Activated CD8-positive, alpha-beta memory T cell treated with anti-CD3 and anti-CD28 coated beads, Interleukin-2, amount 10 ng/mL, durations not matched to agents 7 days and 5 days (primary cell): ENCODE measurements at regions of chr17 and their contacts with region 1.

Region 1: GRCh38 chr17:14926526-14927122 is 338.5 kb downstream of the PMP22 start:
- DNase-seq: peak; percentile 55
- ATAC-seq: no peak
- H3K4me3 Mint-ChIP-seq: no peak overlapping the region
- H3K27ac Mint-ChIP-seq: no peak overlapping the region
- H3K4me1 Mint-ChIP-seq: no peaks in the 10 kb centered on the region
- H3K27me3 Mint-ChIP-seq: no peaks in the 10 kb centered on the region

Region 2: DNA sequence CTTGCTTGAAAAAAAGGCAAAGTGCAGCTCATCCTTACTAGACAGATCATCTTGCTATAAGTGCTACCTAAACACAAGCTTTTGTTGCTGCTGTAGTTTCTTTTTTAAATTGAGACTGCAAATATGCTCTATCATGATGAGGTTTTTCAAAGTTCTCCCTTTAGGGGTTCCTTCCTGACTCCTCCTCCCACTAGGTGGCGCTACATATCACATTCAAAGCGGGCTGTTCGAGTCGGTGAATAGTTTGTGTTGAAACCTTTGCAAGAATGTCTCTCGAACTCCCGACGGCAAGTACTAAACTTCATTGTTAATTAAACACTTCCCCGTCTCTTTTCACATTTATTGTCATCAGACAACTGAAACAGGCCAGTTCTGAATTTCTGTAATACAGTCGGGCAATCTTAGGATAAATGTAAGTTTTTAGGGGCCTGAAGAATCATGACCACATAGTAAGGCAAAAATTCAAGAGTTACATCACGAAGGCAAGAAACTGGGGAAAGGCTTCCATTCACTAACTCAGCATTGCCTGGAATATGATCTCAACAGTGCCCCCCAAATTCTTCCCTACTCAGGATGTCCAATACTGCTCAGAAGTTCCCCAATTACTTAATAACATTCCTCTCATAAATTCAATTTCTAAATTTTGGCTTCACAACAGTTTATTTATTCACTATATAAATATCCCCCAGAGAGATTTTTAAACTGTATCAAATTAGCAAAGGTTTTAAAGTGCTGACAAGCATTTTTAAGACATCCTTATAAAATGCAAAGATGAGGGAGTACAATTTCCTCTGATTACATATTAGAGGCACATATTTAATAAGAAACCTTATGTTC is 1331.6 kb before region 1 on chr17:
- CTCF ChIA-PET with region 1: interaction called, 14 read pairs
- DNase-seq: peak; percentile 82
- ATAC-seq: peak; percentile 77
- H3K4me3 Mint-ChIP-seq: no peak overlapping the region
- H3K27ac Mint-ChIP-seq: no peak overlapping the region
- H3K4me1 Mint-ChIP-seq: peaks cover 6% of the 10 kb centered on the region
- H3K27me3 Mint-ChIP-seq: peaks cover 40% of the 10 kb centered on the region

Region 3: GRCh38 chr17:14790521-14790920 is 136.1 kb before region 1 on chr17:
- CTCF ChIA-PET with region 1: no interaction called
- DNase-seq: no peak
- ATAC-seq: no peak
- H3K4me3 Mint-ChIP-seq: no peak overlapping the region
- H3K27ac Mint-ChIP-seq: no peak overlapping the region
- H3K4me1 Mint-ChIP-seq: no peaks in the 10 kb centered on the region
- H3K27me3 Mint-ChIP-seq: peaks cover 9% of the 10 kb centered on the region